Mammary epithelial cell (primary cell): ENCODE measurements at regions of chr12 and their contacts with region 1.

Region 1: DNA sequence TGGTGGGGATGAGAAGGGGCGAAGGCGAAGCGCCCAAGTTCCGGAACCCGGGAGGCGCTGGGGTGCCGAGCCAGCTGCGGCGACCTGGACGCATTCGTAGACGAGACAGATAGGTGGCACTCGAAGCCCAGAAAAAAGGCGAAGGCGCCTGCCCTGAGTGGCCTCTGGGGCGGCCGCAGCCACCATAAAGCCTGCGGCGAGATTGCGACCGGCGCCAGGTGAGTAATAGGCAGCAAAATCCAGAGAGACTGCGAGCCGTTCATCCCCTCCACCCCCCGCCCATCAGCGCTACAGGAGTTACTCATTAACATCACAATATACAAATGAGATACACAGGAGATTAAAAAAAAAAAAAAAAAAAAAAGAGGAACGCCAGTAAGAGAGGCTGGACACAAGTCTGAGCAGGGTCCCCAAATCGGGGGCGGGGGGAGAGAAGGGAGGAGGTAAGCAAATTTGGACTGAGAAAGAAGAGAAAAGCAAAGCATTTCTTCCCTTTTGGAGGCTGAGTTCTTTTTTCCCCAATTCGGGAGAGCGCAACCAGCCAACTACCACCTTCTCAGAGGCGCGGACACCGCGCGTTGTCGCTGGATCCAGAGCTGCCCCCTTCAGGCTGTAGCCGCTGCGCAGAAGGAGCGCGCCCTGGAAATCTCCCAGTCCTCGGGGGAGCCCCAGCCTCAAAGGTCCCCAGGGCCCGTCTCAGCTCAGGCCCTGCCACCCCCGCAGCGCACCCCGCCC is 15.7 kb downstream of the TBX3 start:
- DNase-seq: peak; percentile 91
- H3K4me3 ChIP-seq: peak overlapping the region; percentile 43 to 60 (median 48)
- H3K27ac ChIP-seq: peak overlapping the region; percentile 75
- H3K4me1 ChIP-seq: peaks cover 41% of the 10 kb centered on the region
- H3K27me3 ChIP-seq: no peaks in the 10 kb centered on the region
- CTCF ChIP-seq: peak; percentile 35 to 69

Region 2: DNA sequence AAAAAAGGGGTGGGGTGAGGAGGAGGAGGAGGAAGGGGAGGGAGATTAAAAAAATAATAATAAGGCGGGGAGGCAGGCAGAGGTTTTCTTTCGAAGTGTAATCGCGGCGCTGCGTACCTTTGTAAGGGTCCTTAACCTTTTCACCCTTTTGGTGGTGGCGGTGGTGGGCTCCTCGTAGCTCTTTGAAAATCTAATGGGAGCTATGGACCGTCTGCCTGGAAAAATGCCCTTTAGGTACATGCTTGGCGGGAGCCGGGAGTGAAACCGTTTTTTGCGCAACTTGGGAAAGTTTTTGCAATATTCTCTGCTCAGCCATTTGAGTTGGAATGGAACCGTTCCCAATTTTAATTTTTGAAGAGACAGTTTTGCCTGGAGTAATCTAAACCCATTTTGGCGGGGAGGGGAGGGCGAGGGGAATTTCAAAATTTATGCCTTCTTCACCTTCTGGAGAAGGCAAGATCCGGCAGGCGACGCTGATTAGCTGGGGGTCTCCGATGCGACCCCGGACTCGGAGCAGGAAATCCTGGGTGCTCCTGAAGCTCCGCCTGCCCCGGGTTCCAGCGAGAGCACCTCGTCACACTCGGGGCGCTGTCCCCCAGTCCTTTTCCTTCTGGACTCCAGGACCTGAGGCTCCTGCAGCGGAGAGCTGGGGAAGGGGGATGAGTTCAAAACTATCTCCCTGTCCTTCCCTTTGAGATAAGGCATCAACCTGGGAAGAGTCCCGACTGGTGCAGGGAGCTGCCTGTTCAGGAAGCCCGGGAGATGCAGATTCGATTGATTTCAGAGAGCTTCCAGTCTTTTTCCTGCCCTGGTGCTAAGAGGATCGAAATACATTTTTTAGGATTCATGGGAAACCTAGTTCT is 187.8 kb before region 1 on chr12:
- CTCF ChIA-PET with region 1: no interaction called
- dilution Hi-C with region 1: no loop called
- in situ Hi-C with region 1: no loop called
- intact Hi-C with region 1: no loop called
- DNase-seq: peak; percentile 30
- H3K4me3 ChIP-seq: peak overlapping the region in 1 of 3 experiments; percentile 14
- H3K27ac ChIP-seq: no peak overlapping the region
- H3K4me1 ChIP-seq: no peaks in the 10 kb centered on the region
- H3K27me3 ChIP-seq: peaks cover 16% of the 10 kb centered on the region
- CTCF ChIP-seq: no peak

Region 3: DNA sequence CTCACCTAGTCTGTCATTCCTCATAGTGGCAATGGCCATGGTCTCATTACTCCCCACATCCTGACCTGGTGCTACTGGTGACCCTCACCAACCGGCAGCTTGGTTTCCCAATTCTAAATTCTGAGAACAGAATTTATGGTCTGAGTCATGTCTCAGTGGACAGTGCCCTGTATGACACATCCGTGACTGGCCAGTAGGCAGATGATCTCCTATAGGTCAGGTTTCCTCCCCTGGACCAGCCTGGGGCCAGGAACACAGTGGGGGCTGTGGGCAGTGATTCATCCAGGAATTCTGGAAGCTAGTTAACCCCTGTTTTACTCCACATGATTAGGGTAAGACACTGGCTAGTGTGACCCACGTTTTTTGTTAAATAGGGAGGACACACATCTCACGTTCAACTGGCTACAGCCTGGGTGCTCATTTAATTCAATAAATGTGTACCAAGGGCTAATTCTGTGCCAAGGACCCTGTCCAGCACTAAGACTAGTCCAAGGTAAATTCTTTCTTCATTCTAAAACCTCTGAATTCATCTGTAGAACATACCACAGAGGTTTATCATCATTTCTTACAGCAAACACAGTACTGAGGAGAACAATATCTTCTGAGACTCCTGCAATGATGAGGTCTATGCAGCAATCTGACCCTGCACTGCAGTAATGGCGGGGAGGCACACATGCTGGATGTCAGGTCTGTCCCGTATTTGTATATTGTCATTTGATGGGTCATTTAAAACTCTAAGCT is 265.3 kb after region 1 on chr12:
- CTCF ChIA-PET with region 1: interaction called, 10 read pairs
- dilution Hi-C with region 1: no loop called
- in situ Hi-C with region 1: no loop called
- intact Hi-C with region 1: no loop called
- DNase-seq: peak; percentile 83
- H3K4me3 ChIP-seq: no peak overlapping the region
- H3K27ac ChIP-seq: peak overlapping the region; percentile 57
- H3K4me1 ChIP-seq: peaks cover 25% of the 10 kb centered on the region
- H3K27me3 ChIP-seq: no peaks in the 10 kb centered on the region
- CTCF ChIP-seq: no peak

Region 4: DNA sequence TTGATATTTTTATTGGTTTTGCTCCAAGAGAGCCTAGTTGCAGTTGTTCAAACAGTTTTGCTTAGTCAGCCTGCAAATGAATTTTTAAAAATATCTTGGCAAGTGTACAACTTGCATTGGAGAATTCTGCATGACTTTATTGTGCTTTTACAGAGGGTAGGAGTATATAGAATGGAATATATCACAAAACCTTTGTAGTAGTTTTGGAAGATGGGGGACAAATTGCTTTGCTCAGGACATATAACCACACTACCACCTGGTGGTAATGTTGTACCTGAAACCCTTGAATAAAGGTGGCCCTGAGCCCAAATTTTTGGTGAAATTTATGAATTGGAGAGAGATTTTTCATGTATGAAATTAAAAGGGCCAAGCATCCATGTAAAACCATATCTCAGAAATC is 964.0 kb after region 1 on chr12:
- CTCF ChIA-PET with region 1: no interaction called
- dilution Hi-C with region 1: no loop called
- in situ Hi-C with region 1: loop called (anchors 10 kb)
- intact Hi-C with region 1: loop called (anchors 1 kb)
- DNase-seq: peak; percentile 8
- H3K4me3 ChIP-seq: no peak overlapping the region
- H3K27ac ChIP-seq: no peak overlapping the region
- H3K4me1 ChIP-seq: no peaks in the 10 kb centered on the region
- H3K27me3 ChIP-seq: peaks cover 3% of the 10 kb centered on the region
- CTCF ChIP-seq: peak; percentile 23 to 61